Psoas muscle (tissue), 8 donors: ENCODE measurements at regions of chr9 and their contacts with region 1.

Region 1: GRCh38 chr9:13898957-13899356 is 415.0 kb downstream of the NFIB start:
- DNase-seq: no peak
- ATAC-seq: no peak
- H3K4me3 ChIP-seq: no peak overlapping the region
- H3K27ac ChIP-seq: peak overlapping the region; percentile 44
- H3K4me1 ChIP-seq: peaks cover 24% of the 10 kb centered on the region
- H3K27me3 ChIP-seq: no peaks in the 10 kb centered on the region
- CTCF ChIP-seq: no peak

Region 2: GRCh38 chr9:13750061-13750460 is 148.9 kb before region 1 on chr9:
- intact Hi-C with region 1: no loop called
- DNase-seq: no peak
- ATAC-seq: no peak
- H3K4me3 ChIP-seq: no peak overlapping the region
- H3K27ac ChIP-seq: no peak overlapping the region
- H3K4me1 ChIP-seq: no peaks in the 10 kb centered on the region
- H3K27me3 ChIP-seq: peaks cover 0 to 2% (median 0%) of the 10 kb centered on the region in 3 donors
- CTCF ChIP-seq: no peak

Region 3: DNA sequence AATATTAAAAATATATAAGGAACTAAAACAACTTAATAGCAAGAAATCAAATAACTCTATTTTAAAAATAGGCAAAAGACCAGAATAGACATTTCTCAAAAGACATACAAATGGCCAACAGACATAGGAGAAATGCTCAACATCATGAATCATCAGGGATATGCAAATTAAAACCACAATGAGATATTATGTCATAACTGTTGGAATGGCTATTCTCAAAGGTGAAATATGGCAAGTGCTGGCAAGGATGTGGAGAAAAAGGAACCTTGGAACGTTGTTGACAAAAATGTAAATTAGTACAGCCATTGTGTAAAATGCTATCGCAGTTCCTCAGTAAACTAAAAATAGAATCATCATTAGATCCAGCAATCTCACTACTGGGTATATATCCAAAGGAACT is 53.5 kb before region 1 on chr9:
- intact Hi-C with region 1: loop called in 1 of 2 experiments (anchors 5 kb)
- DNase-seq: no peak
- ATAC-seq: no peak
- H3K4me3 ChIP-seq: no peak overlapping the region
- H3K27ac ChIP-seq: no peak overlapping the region
- H3K4me1 ChIP-seq: peaks cover 12% of the 10 kb centered on the region
- H3K27me3 ChIP-seq: no peaks in the 10 kb centered on the region
- CTCF ChIP-seq: no peak

Region 4: DNA sequence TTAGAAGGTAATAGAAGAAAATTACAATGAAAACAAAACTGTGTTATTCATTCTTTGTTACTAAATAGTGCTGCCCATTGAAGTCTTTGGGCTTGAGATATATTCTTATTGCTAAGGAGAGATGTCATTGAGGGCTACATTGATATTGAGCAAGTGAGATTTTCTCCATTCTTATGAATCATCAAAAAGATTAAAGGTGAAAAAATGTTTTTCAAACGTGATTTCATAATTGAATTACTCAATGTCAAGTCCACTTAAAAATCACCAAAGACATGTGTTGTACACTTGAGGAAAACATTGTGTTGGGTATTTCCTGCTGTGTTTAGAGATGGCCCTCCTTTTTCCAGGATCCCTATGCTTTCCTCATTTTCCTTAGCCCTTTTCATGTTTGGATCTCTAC is 33.1 kb before region 1 on chr9:
- intact Hi-C with region 1: loop called in 1 of 2 experiments (anchors 5 kb)
- DNase-seq: no peak
- ATAC-seq: no peak
- H3K4me3 ChIP-seq: no peak overlapping the region
- H3K27ac ChIP-seq: no peak overlapping the region
- H3K4me1 ChIP-seq: peaks cover 9% of the 10 kb centered on the region
- H3K27me3 ChIP-seq: no peaks in the 10 kb centered on the region
- CTCF ChIP-seq: no peak